Activated CD4-positive, alpha-beta memory T cell treated with anti-CD3 and anti-CD28 coated beads, Interleukin-2, amount 10 ng/mL, durations not matched to agents 7 days and 5 days (primary cell): ENCODE measurements at regions of chr15 and their contacts with region 1.

Region 1: GRCh38 chr15:73265536-73266153 is 103.1 kb downstream of the HCN4 start:
- DNase-seq: peak; percentile 66
- H3K4me3 Mint-ChIP-seq: no peak overlapping the region
- H3K27ac Mint-ChIP-seq: no peak overlapping the region
- H3K4me1 Mint-ChIP-seq: peaks cover 1% of the 10 kb centered on the region
- H3K27me3 Mint-ChIP-seq: no peaks in the 10 kb centered on the region

Region 2: DNA sequence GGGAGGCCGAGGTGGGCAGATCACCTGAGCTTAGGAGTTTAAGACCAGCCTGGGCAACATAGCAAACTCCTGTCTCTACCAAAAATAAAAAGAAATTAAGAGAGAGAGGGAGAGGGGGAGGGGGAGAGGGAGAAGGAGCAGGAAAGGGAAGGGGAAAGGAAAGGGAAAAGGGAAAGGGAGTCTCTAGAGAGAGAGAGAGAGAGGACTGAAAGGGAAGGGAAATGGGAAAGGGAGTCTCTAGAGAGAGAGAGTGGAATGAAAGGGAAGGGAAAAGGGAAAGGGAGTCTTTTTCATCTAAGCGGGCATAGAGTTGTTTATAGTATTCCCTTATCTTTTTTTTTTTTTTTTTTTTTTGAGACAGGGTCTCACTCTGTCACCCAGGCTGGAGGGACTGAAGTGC is 65.3 kb before region 1 on chr15:
- CTCF ChIA-PET with region 1: no interaction called
- POLR2A ChIA-PET with region 1: no interaction called
- DNase-seq: no peak
- H3K4me3 Mint-ChIP-seq: no peak overlapping the region
- H3K27ac Mint-ChIP-seq: no peak overlapping the region
- H3K4me1 Mint-ChIP-seq: peaks cover 1% of the 10 kb centered on the region
- H3K27me3 Mint-ChIP-seq: no peaks in the 10 kb centered on the region

Region 3: DNA sequence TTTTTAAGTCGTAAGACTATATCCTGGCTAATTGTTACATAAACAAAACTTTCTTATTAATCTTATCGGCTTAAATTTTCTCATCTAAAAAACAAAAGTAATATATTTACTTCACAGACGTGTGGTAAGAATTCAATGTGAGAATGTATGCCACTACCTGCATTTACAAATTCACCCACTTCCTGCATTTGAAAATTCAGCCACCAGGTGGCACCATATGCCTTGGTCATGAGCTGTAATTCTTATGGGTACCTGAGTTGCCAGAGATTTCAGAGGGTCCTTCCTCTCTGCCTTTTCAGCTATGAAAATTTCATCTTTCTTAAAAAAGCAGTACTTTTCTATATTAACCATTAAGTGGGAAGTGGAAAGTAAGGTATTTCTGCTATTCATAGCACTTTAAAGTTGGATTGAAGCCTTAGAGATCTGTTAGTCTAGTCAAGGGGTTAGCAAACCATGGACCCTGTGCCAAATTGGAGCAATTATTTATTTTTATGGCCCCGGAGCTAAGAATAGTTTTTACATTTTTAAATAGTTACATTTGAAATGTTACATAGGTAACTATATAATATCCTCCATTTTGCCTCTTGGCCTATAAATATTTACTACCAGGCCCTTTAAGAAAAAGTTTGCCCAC is 24.7 kb before region 1 on chr15:
- CTCF ChIA-PET with region 1: interaction called, 47 read pairs
- POLR2A ChIA-PET with region 1: no interaction called
- DNase-seq: peak; percentile 82
- H3K4me3 Mint-ChIP-seq: no peak overlapping the region
- H3K27ac Mint-ChIP-seq: no peak overlapping the region
- H3K4me1 Mint-ChIP-seq: peaks cover 19% of the 10 kb centered on the region
- H3K27me3 Mint-ChIP-seq: no peaks in the 10 kb centered on the region

Region 4: DNA sequence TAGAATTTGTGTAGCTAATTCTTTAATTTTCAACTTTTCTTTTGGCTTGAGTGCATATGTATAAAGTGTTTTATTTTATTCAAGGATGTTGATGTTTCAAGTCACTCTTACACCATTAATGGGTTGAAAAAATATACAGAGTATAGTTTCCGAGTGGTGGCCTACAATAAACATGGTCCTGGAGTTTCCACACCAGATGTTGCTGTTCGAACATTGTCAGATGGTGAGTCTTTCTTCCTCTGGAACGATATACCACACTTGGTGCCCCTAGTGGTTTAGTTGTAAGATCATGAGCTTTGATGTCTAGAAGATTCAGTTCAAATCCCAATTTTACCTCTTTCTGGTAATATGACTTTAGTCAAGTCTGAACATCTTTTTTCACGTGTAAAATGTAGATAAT is 16.1 kb before region 1 on chr15:
- CTCF ChIA-PET with region 1: interaction called, 47 read pairs
- POLR2A ChIA-PET with region 1: no interaction called
- DNase-seq: no peak
- H3K4me3 Mint-ChIP-seq: no peak overlapping the region
- H3K27ac Mint-ChIP-seq: no peak overlapping the region
- H3K4me1 Mint-ChIP-seq: no peaks in the 10 kb centered on the region
- H3K27me3 Mint-ChIP-seq: no peaks in the 10 kb centered on the region

Region 5: DNA sequence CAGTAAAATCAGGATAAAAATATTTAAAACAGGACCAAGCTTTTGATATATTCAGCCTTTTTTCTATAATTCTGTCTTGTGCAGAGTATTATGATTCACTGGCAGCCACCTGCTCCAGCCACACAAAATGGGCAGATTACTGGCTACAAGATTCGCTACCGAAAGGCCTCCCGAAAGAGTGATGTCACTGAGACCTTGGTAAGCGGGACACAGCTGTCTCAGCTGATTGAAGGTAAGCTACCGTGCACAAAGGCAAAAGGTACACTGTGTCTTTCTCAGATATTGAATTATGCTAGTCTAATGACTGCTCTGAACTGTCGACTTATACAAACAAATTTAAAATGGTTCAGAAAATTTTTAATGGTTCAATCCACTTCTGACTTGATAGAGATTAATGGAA is 11.0 kb before region 1 on chr15:
- CTCF ChIA-PET with region 1: interaction called, 12 read pairs
- POLR2A ChIA-PET with region 1: interaction called, 5 read pairs
- DNase-seq: no peak
- H3K4me3 Mint-ChIP-seq: no peak overlapping the region
- H3K27ac Mint-ChIP-seq: no peak overlapping the region
- H3K4me1 Mint-ChIP-seq: peaks cover 14% of the 10 kb centered on the region
- H3K27me3 Mint-ChIP-seq: no peaks in the 10 kb centered on the region